Prostate gland (tissue), 2 donors: ENCODE measurements at regions of chr5 and their contacts with region 1.

Region 1: DNA sequence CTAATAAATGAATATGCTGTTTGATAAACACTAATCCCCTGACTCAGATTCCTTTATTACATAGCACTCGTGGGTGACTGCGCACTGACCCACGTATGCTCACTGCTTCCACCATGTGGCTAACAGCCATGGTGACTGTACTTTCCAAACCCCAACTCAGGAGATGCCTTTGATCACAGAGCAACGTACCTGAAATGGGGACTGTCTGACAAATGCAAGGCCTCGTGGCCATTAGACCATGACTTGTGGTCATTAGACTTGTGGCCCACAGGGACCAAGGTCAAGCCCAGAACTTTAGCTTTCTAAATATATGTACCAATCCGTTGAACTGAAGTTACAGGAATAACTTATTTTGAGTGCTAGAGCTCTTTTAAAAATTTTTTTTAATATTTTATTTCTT is 46.6 kb downstream of the CYFIP2 start:
- DNase-seq: peak; percentile 17
- H3K4me3 ChIP-seq: no peak overlapping the region
- H3K27ac ChIP-seq: no peak overlapping the region
- H3K4me1 ChIP-seq: no peaks in the 10 kb centered on the region
- H3K27me3 ChIP-seq: no peaks in the 10 kb centered on the region
- CTCF ChIP-seq: peak in 3 of 4 experiments; percentile 38 to 63 (median 50)
- POLR2A ChIP-seq: no peak

Region 2: DNA sequence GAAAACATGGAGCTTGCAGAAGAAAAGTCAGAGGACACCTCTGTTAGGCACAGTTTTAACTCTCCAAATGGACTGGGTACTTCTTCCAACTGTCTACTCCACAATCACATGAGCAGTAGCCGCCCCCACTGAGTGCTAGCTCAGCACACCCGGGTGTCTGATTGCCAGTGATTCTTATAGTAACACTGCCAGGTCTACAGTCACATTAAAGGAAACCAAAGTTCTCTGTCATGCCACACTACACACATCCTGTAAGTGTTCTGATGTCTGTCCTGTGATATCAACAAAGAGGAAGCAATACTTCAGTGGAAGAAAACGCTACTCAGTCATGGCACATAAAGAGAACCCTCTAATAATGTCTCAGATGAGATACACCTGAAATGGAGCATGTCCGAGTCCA is 203.5 kb before region 1 on chr5 and contains the start of gene HAVCR2:
- intact Hi-C with region 1: no loop called
- DNase-seq: peak; percentile 10
- H3K4me3 ChIP-seq: no peak within 1 kb of the TSS
- H3K27ac ChIP-seq: no peak within 1 kb of the TSS
- H3K4me1 ChIP-seq: no peaks in the 10 kb centered on the region
- H3K27me3 ChIP-seq: no peaks in the 10 kb centered on the region
- CTCF ChIP-seq: no peak
- POLR2A ChIP-seq: no peak
- total RNA-seq, gene HAVCR2: 1.8 to 2.8 TPM

Region 3: GRCh38 chr5:157148734-157149615 is 163.5 kb before region 1 on chr5:
- intact Hi-C with region 1: loop called (anchors 5 kb)
- DNase-seq: peak; percentile 57
- H3K4me3 ChIP-seq: no peak overlapping the region
- H3K27ac ChIP-seq: no peak overlapping the region
- H3K4me1 ChIP-seq: no peaks in the 10 kb centered on the region
- H3K27me3 ChIP-seq: no peaks in the 10 kb centered on the region
- CTCF ChIP-seq: peak; percentile 59 to 74 (median 63)
- POLR2A ChIP-seq: no peak

Region 4: GRCh38 chr5:157159209-157159751 is 153.2 kb before region 1 on chr5:
- intact Hi-C with region 1: no loop called
- DNase-seq: no peak
- H3K4me3 ChIP-seq: no peak overlapping the region
- H3K27ac ChIP-seq: no peak overlapping the region
- H3K4me1 ChIP-seq: no peaks in the 10 kb centered on the region
- H3K27me3 ChIP-seq: no peaks in the 10 kb centered on the region
- CTCF ChIP-seq: no peak
- POLR2A ChIP-seq: no peak

Region 5: GRCh38 chr5:157253547-157253946 is 58.9 kb before region 1 on chr5:
- intact Hi-C with region 1: loop called (anchors 2 kb)
- DNase-seq: peak; percentile 20
- H3K4me3 ChIP-seq: no peak overlapping the region
- H3K27ac ChIP-seq: no peak overlapping the region
- H3K4me1 ChIP-seq: no peaks in the 10 kb centered on the region
- H3K27me3 ChIP-seq: no peaks in the 10 kb centered on the region
- CTCF ChIP-seq: peak in 3 of 4 experiments; percentile 53 to 71 (median 66)
- POLR2A ChIP-seq: no peak

Region 6: DNA sequence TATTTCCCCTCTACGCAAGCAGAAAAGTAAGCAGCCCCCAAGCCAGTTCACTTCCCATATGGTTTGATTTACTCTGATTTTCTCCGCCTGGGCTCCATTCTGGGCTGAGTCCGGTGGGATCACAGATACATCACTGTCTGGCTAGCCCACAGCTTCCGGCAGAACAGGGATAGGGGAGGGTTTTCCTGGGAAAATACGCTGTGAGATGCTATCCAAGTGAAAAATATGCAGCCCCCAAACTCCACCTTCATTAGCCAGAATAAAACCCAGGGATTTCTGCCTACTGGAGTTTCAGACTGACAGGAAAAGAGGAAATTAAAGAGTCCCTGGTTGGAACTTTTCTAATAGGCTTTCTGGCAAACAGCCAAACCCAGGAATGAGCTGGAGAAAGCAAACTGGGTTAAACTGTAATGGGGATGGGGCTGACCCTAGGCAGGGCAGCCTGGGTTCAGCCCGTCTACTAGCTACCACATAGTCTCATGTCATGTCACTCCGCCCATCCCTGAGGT is 130.6 kb after region 1 on chr5:
- intact Hi-C with region 1: no loop called
- DNase-seq: no peak
- H3K4me3 ChIP-seq: no peak overlapping the region
- H3K27ac ChIP-seq: no peak overlapping the region
- H3K4me1 ChIP-seq: no peaks in the 10 kb centered on the region
- H3K27me3 ChIP-seq: no peaks in the 10 kb centered on the region
- CTCF ChIP-seq: no peak
- POLR2A ChIP-seq: no peak